Right ventricle myocardium inferior (tissue), 1 donor: ENCODE measurements at regions of chr12 and their contacts with region 1.

Region 1: GRCh38 chr12:11069854-11070365 is 7.8 kb upstream of the TAS2R46 start:
- DNase-seq: no peak
- ATAC-seq: no peak

Region 2: GRCh38 chr12:11015775-11016430 is 54.0 kb before region 1 on chr12:
- intact Hi-C with region 1: loop called (anchors 2 kb)
- DNase-seq: no peak
- ATAC-seq: peak; percentile 16

Region 3: GRCh38 chr12:11136075-11136474 is 66.2 kb after region 1 on chr12:
- intact Hi-C with region 1: no loop called
- DNase-seq: no peak
- ATAC-seq: no peak